AG04450 (cell line): ENCODE measurements at regions of chr12 and their contacts with region 1.

Region 1: DNA sequence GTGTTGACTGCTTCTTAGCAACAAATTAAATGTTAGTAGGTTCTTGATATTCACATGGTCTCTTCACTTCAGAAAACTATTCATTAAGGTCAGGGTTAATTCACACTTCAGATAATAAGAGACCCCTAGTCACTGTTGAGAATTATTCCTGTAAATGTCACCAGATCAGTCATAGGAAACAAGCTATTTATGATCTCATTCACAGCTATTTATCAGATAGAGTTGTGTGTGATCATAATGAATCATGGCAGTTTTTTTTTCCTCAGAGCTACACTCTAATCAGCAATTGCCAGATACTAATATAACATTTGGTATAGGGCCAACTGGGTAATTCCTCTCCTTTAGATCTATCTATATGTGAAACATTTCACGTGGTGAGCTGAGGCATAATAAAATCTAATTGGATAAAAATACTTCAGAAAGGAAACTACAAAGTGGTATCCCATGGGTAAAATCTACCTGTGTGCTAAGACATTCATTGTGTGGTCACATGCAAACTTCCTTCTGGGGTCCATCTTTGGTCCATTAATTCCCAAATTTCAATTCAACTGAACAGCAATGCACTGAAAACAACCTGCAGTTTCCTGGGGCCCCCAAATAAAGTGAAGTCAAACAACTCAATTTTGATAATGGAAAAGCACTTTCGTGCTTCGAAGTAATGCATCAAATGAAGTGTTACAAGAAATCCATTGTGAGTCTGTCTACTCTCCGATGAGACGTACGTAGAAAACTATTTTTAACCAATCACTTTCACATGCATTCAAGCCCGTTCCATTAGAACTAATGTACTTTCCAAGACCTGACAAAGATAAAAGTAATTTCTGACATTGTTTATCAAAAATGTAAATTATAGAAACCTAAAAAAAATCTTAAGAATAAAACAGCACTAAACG is 197.0 kb downstream of the ACSS3 start:
- DNase-seq: no peak
- H3K4me3 ChIP-seq: no peak overlapping the region
- H3K27ac ChIP-seq: no peak overlapping the region
- H3K27me3 ChIP-seq: no peaks in the 10 kb centered on the region
- CTCF ChIP-seq: no peak

Region 2: GRCh38 chr12:81015510-81015909 is 259.4 kb before region 1 on chr12:
- CTCF ChIA-PET with region 1: no interaction called
- POLR2A ChIA-PET with region 1: no interaction called
- DNase-seq: no peak
- H3K4me3 ChIP-seq: no peak overlapping the region
- H3K27ac ChIP-seq: no peak overlapping the region
- H3K27me3 ChIP-seq: no peaks in the 10 kb centered on the region
- CTCF ChIP-seq: no peak

Region 3: DNA sequence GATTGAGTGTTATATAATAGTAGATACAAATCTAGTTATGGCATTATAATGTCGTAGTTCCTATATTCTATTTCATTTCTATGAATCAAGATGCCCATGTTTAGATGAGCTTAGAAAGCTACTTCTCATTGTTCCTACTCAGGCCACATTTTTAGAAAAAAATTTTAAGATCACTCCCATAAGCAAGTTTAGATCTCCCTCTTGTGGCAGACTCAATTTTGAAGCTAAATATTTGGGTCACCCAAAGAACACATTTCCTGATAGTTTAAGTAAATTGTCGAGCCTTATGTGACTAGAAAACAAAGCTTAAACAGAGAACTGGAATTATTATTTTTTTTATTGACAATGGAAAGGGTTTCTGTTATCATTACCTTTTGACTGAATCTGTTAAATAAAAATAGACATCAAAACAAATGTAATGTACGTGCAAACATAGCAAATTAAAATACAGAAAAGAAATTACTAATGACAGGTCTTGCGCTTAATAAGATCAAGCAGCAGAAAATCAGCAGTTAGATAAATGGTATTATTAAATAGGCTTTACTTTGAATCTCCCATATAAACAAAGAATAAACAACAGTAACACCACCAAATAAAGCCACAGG is 16.8 kb before region 1 on chr12:
- CTCF ChIA-PET with region 1: interaction called, 10 read pairs
- POLR2A ChIA-PET with region 1: no interaction called
- DNase-seq: peak; percentile 8
- H3K4me3 ChIP-seq: no peak overlapping the region
- H3K27ac ChIP-seq: no peak overlapping the region
- H3K27me3 ChIP-seq: no peaks in the 10 kb centered on the region
- CTCF ChIP-seq: peak; percentile 64